IMR-90 (cell line): ENCODE measurements at regions of chr6 and their contacts with region 1.

Region 1: GRCh38 chr6:31087494-31088089 is 24.8 kb downstream of the C6orf15 start:
- DNase-seq: peak; percentile 86
- ATAC-seq: peak; percentile 89
- H3K4me3 ChIP-seq: no peak overlapping the region
- H3K27ac ChIP-seq: no peak overlapping the region
- H3K4me1 ChIP-seq: peaks cover 10% of the 10 kb centered on the region
- H3K27me3 ChIP-seq: no peaks in the 10 kb centered on the region; the same call in 1 of the 2 replicates
- CTCF ChIP-seq: peak; percentile 89
- POLR2A ChIP-seq: no peak
- RAD21 ChIP-seq: peak; percentile 84

Region 2: GRCh38 chr6:30541515-30542403 is 545.8 kb before region 1 on chr6:
- CTCF ChIA-PET with region 1: interaction called, 5 read pairs
- POLR2A ChIA-PET with region 1: no interaction called
- dilution Hi-C with region 1: no loop called
- in situ Hi-C with region 1: no loop called
- intact Hi-C with region 1: loop called (anchors 5 kb)
- DNase-seq: peak; percentile 87
- ATAC-seq: peak; percentile 85
- H3K4me3 ChIP-seq: no peak overlapping the region; the same call in 1 of the 2 replicates
- H3K27ac ChIP-seq: no peak overlapping the region
- H3K4me1 ChIP-seq: no peaks in the 10 kb centered on the region
- H3K27me3 ChIP-seq: no peaks in the 10 kb centered on the region
- CTCF ChIP-seq: peak; percentile 91
- POLR2A ChIP-seq: no peak
- RAD21 ChIP-seq: peak; percentile 69

Region 3: GRCh38 chr6:30727920-30728553 is 359.6 kb before region 1 on chr6:
- CTCF ChIA-PET with region 1: no interaction called
- POLR2A ChIA-PET with region 1: interaction called, 3 read pairs
- dilution Hi-C with region 1: no loop called
- in situ Hi-C with region 1: no loop called
- intact Hi-C with region 1: loop called (anchors 1 kb)
- DNase-seq: peak; percentile 71
- ATAC-seq: peak; percentile 33
- H3K4me3 ChIP-seq: no peak overlapping the region
- H3K27ac ChIP-seq: peak overlapping the region; percentile 2; the same call in 1 of the 2 replicates
- H3K4me1 ChIP-seq: peaks cover 2% of the 10 kb centered on the region
- H3K27me3 ChIP-seq: no peaks in the 10 kb centered on the region
- CTCF ChIP-seq: peak; percentile 50
- POLR2A ChIP-seq: no peak
- RAD21 ChIP-seq: peak; percentile 45

Region 4: DNA sequence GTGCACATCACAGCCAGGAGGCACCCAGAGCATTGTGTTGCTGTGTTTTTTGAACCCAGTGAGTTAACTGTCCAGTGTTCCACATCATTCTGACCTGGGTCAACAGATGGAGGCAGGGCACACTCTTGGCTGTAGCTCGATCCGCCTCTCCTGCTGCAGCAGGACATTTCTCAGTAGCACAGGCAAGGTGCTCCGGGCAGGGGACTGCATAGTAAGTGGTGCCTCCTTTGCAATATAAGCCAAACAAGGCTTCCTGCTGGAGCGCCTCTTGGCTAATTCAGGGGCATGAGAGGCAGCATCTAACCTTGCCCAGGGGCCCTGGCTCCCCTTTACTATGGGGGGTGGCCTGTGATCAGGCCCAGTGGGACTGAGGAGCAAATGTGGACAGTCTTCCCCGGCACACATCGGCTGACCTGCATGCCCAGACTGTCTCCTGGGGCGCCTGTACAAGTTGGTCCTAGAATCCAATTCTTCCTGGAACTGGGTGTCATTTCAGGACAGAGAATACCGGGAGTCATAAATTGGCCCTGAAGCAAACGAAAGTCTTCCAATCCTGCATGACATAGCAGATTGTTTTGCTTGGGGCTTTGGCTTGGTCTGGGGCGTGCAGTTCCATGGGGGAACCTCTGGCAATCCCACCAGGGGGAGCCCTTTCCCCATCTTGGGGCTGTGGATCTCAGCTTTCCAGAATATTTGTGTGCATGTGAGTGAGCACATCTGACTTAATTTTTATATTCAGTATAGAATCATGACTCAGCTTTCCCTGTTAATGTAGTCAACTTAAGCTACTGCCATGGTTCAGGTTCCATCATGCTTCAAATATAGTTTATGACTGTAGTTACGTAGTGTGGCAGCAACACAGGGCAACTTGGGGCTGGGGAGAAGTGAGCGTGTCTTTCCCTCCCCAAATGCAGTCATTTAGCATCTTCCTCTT is 259.3 kb before region 1 on chr6:
- CTCF ChIA-PET with region 1: interaction called, 3 read pairs
- POLR2A ChIA-PET with region 1: no interaction called
- dilution Hi-C with region 1: no loop called
- in situ Hi-C with region 1: no loop called
- intact Hi-C with region 1: loop called (anchors 2 kb)
- DNase-seq: peak; percentile 90
- ATAC-seq: peak; percentile 98
- H3K4me3 ChIP-seq: no peak overlapping the region
- H3K27ac ChIP-seq: peak overlapping the region; percentile 58
- H3K4me1 ChIP-seq: peaks cover 16% of the 10 kb centered on the region
- H3K27me3 ChIP-seq: peaks cover 5% of the 10 kb centered on the region
- CTCF ChIP-seq: peak; percentile 99
- POLR2A ChIP-seq: peak; percentile 59
- RAD21 ChIP-seq: peak; percentile 99

Region 5: GRCh38 chr6:31114970-31115849 is 27.6 kb after region 1 on chr6:
- CTCF ChIA-PET with region 1: interaction called, 10 read pairs
- POLR2A ChIA-PET with region 1: no interaction called
- dilution Hi-C with region 1: no loop called
- in situ Hi-C with region 1: no loop called
- intact Hi-C with region 1: no loop called
- DNase-seq: peak; percentile 42
- ATAC-seq: peak; percentile 16; the same call in 1 of the 2 replicates
- H3K4me3 ChIP-seq: no peak overlapping the region
- H3K27ac ChIP-seq: peak overlapping the region; percentile 29
- H3K4me1 ChIP-seq: peaks cover 11% of the 10 kb centered on the region
- H3K27me3 ChIP-seq: peaks cover 14% of the 10 kb centered on the region
- CTCF ChIP-seq: peak; percentile 32
- POLR2A ChIP-seq: no peak
- RAD21 ChIP-seq: peak; percentile 32; the same call in 1 of the 2 replicates

Region 6: DNA sequence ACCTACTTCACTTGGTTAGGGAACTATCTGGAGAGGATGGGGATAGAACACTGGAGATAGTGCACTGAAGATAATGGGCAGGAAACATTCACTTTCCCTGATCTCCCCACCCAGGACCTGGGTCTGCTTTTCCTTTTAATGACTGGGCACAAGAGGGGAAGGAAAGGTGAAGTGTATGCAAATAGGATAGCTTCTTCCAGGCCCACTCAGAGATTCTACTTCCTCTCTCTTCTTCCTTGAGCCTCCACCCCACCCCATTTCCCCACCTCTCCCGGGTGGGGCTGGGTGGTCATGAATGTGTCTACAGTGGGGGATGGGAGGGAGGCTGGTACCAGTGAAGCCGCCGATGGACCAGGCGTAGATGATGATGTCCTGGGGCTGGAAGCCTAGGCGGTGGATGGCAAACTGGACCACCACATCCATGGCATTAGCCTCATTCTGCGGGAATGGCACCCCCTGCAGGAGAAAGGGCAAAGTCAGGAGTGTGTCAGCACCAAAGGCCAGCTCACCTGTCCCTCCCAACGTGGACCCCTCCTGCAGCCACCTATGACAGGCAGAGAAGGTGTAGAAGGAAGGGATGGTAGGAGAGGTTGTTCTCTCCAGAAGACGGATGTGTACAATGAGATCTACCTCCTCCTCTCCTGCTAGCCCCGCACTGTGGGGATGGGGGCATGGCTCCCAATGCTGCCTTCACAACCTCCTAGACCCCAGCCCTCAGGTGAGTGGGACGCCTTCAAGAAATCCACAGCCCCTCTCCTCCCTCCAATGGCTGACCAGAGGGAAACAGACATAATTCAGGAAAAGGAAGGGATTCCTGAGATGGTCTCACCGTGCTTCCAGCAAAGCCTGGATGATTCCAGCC is 601.9 kb after region 1 on chr6:
- CTCF ChIA-PET with region 1: no interaction called
- POLR2A ChIA-PET with region 1: no interaction called
- dilution Hi-C with region 1: no loop called
- in situ Hi-C with region 1: no loop called
- intact Hi-C with region 1: no loop called
- DNase-seq: no peak
- ATAC-seq: peak; percentile 48; the same call in 1 of the 2 replicates
- H3K4me3 ChIP-seq: no peak overlapping the region
- H3K27ac ChIP-seq: no peak overlapping the region
- H3K4me1 ChIP-seq: no peaks in the 10 kb centered on the region
- H3K27me3 ChIP-seq: no peaks in the 10 kb centered on the region
- CTCF ChIP-seq: 0 out of 2 replicates have a peak, but pooled peaks have one; percentile 26
- POLR2A ChIP-seq: no peak
- RAD21 ChIP-seq: no peak